Naive thymus-derived CD4-positive, alpha-beta T cell (primary cell): ENCODE measurements at regions of chr20 and their contacts with region 1.

Region 1: DNA sequence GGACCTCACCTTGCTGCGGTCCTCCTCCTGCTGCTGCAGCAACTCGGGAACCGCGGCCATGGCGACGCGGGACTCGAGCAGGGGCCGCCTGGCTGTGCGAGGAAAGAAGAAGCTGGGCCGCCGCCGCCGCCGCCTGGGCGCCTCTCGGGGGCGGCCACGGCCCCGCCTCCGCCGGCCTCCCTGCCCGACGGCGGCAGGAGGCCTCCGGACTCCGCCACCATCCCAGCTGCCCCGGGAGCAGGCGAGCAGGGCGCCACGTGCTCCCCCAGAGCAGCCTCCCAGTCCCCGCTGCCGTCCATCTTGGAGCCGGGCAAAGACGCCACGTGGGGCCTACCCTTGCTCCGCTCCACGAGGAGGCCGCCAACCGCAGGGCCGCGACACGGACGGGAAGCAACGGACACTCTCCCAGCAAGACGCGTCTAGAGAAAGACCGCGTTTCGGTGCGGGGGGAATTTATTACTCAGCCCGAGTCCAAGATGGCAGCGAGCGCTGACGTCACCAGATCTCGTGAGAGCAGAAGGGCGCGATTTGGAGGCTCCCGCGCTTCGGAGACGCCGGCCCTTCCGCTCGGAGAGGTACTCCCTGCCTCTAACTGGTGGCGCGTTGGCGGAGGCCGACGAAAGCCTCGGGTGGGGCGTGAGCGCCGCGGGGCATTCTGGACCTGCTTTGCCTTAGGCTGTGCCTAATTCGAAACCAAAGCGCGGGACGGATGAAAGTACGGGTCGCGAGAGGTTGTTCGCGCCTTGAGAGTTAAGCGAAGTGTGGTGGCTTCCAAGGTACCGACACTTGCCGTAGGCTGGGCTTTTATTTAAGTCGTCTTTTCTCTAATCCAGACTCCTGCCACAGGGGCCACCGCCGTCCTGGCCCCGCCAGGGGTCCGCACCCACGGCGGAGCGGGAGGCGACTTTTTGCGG is at the starts of genes MGME1 and SNX5:
- DNase-seq: peak; percentile 98 to 99 (median 99)
- ATAC-seq: peak; percentile 95
- H3K4me3 ChIP-seq: peak within 1 kb of the TSS; percentile 91
- H3K4me3 Mint-ChIP-seq: peak within 1 kb of the TSS; percentile 89 to 97 (median 94)
- H3K27ac ChIP-seq: peak within 1 kb of the TSS; percentile 96
- H3K27ac Mint-ChIP-seq: peak within 1 kb of the TSS; percentile 93 to 98 (median 97)
- H3K4me1 ChIP-seq: peaks cover 53 to 59% of the 10 kb centered on the region in 2 donors
- H3K4me1 Mint-ChIP-seq: peaks cover 54 to 76% (median 71%) of the 10 kb centered on the region in 7 donors
- H3K27me3 ChIP-seq: no peaks in the 10 kb centered on the region
- H3K27me3 Mint-ChIP-seq: no peaks in the 10 kb centered on the region
- total RNA-seq, gene MGME1: 4.9 to 41.0 (median 13.1) TPM
- total RNA-seq, gene SNX5: 41.4 to 148 (median 61.9) TPM

Region 2: DNA sequence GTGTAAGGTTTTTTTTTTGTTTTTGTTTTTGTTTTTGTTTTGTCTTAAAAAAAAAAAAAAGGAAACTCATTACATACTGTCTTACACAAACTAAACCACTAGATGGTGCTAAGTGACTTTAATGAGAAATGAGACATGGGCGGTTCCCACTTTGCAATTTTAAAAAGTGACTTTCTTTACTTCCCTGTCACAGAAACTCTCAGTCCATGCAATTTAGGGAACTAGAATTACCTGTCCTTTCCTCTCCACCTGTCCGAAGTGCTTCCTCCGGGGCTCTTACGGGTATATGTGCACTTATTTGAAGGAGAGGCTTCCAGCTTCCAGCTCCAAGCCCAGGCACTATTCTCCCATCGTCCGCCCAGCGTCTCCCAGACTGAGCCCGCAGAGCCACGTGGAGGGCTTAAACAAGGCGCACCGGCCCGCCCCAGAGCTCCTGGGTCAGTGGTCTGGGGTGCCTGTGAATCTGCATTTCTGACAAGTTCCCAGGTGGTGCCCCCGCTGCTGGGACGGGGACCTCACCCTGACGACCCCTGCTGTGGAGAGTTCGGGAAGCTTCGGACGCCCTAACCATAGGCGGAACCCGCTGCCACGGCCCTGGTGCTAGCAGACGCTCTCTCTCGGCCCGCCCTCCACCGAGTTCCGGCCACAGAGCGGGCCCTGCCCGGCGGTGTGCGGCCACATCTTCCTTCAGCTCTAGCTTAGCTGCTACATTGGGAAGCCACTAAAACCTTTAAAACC is 463.6 kb before region 1 on chr20:
- CTCF ChIA-PET with region 1: no interaction called
- POLR2A ChIA-PET with region 1: no interaction called
- intact Hi-C with region 1: loop called in 1 of 2 experiments (anchors 1 kb)
- DNase-seq: peak; percentile 13 to 70 (median 62)
- ATAC-seq: peak; percentile 85
- H3K4me3 ChIP-seq: peak overlapping the region; percentile 65
- H3K4me3 Mint-ChIP-seq: peak overlapping the region; percentile 82 to 95 (median 91)
- H3K27ac ChIP-seq: no peak overlapping the region
- H3K27ac Mint-ChIP-seq: peak overlapping the region in 8 of 9 donors; percentile 15 to 92 (median 82)
- H3K4me1 ChIP-seq: peaks cover 6 to 27% of the 10 kb centered on the region in 2 donors
- H3K4me1 Mint-ChIP-seq: peaks cover 10 to 57% (median 36%) of the 10 kb centered on the region in 7 donors
- H3K27me3 ChIP-seq: no peaks in the 10 kb centered on the region
- H3K27me3 Mint-ChIP-seq: peaks cover 0 to 19% (median 0%) of the 10 kb centered on the region in 5 donors

Region 3: DNA sequence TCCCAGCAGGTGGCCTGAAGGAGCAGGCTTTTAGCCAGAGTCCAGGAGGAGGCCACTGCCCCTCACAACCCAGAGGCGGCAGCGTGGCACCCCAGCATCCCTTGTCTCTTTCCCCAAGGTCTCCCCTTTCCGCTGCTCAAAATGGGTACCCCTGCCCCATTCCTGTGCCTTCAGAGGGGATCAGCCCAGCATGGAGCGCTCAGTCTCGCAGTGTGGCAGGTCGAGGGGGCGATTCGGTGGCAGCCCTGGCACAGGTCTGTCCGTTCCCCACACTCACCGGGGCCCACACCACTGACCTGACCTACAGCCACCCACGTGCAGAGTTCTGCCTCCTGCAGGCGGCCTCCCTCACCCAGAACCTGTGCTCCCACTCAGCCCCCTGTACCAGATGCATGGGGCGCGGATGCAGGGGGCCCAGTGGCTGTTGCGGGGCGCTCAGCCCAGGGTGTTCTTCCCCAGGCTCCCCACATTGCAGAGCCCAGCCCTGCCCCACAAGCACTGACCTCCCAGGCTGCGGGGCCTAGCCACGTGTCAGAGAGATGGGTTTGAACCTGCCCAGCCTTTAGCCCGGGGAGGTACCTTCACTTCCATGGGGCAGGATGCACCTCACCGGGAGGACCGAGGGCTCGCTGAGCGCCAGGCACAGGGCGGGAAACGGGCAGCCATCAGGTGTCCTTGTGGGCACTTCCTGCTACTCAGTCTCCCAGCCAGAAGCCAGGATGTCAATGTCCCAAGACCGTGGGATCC is 356.9 kb before region 1 on chr20:
- CTCF ChIA-PET with region 1: no interaction called
- POLR2A ChIA-PET with region 1: interaction called, 6 read pairs
- intact Hi-C with region 1: loop called in 1 of 2 experiments (anchors 2 kb)
- DNase-seq: peak in 4 of 9 donors; percentile 7 to 30 (median 20)
- ATAC-seq: no peak
- H3K4me3 ChIP-seq: peak overlapping the region; percentile 36
- H3K4me3 Mint-ChIP-seq: peak overlapping the region in 8 of 10 donors; percentile 23 to 85 (median 68)
- H3K27ac ChIP-seq: peak overlapping the region; percentile 60
- H3K27ac Mint-ChIP-seq: peak overlapping the region; percentile 85 to 98 (median 95)
- H3K4me1 ChIP-seq: peaks cover 39 to 40% of the 10 kb centered on the region in 2 donors
- H3K4me1 Mint-ChIP-seq: peaks cover 20 to 53% (median 40%) of the 10 kb centered on the region in 7 donors
- H3K27me3 ChIP-seq: no peaks in the 10 kb centered on the region
- H3K27me3 Mint-ChIP-seq: no peaks in the 10 kb centered on the region

Region 4: DNA sequence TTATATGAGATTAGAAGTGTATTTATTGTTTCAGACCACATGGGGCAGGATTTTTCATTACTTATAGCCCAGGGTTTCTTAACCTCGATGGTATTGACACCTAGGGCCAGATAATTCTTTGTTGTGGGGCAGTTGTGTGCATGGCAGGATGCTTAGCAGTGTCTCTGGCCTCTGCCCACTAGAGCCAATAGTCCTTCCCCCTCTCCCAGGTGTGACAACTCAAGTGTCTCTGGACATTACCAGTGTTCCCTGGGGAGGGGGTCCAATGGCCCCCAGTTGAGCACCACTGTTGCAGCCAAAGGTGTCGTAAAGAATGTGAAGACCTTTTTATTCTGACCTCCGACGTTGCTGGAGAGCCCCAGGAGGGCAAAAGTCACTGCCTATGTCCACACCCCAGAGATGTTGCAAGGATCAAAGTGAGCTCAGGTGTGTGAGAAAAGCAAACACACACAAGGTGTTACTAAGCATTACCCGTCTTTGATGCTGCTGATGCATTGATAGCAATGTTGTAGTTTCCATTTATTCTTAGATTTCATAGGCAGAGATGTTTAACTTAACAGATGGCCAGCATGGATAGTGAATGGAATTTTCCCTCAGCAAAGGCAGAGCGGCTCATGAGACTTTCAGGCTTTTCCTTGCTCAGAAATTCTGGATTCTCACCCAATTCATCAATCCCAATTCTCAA is 246.7 kb before region 1 on chr20:
- CTCF ChIA-PET with region 1: no interaction called
- POLR2A ChIA-PET with region 1: no interaction called
- intact Hi-C with region 1: no loop called
- DNase-seq: no peak
- ATAC-seq: no peak
- H3K4me3 ChIP-seq: no peak overlapping the region
- H3K4me3 Mint-ChIP-seq: no peak overlapping the region
- H3K27ac ChIP-seq: no peak overlapping the region
- H3K27ac Mint-ChIP-seq: no peak overlapping the region
- H3K4me1 ChIP-seq: no peaks in the 10 kb centered on the region
- H3K4me1 Mint-ChIP-seq: no peaks in the 10 kb centered on the region
- H3K27me3 ChIP-seq: no peaks in the 10 kb centered on the region
- H3K27me3 Mint-ChIP-seq: peaks cover 3 to 24% (median 5%) of the 10 kb centered on the region in 5 donors

Region 5: GRCh38 chr20:17987988-17988387 is 19.4 kb after region 1 on chr20:
- CTCF ChIA-PET with region 1: no interaction called
- POLR2A ChIA-PET with region 1: interaction called, 5 read pairs
- intact Hi-C with region 1: loop called in 1 of 2 experiments (anchors 2 kb)
- DNase-seq: peak in 6 of 9 donors; percentile 49 to 73 (median 64)
- ATAC-seq: peak; percentile 81
- H3K4me3 ChIP-seq: no peak overlapping the region
- H3K4me3 Mint-ChIP-seq: peak overlapping the region in 9 of 10 donors; percentile 4 to 62 (median 30)
- H3K27ac ChIP-seq: no peak overlapping the region
- H3K27ac Mint-ChIP-seq: peak overlapping the region in 6 of 9 donors; percentile 0 to 68 (median 36)
- H3K4me1 ChIP-seq: peaks cover 0 to 5% of the 10 kb centered on the region in 2 donors
- H3K4me1 Mint-ChIP-seq: peaks cover 2 to 42% (median 18%) of the 10 kb centered on the region in 7 donors
- H3K27me3 ChIP-seq: no peaks in the 10 kb centered on the region
- H3K27me3 Mint-ChIP-seq: no peaks in the 10 kb centered on the region

Region 6: DNA sequence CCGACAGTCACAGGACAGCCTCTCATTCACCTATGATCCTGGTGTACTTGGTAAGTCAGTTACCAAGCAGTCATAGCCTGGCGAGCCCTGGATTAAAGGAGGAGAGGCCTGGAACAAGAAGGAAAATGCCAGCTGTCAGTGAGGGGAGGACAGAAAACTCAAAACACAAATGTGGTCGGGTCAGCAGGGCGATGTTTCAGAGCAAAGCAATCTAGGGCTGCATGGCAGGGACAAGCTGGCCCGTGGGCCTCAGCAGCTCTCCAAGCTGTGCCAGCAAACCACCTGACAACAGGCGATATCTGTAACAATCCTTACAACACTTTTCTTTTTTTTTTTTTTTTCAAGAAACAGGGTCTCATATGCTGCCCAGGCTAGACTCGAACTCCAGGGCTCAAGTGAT is 40.5 kb after region 1 on chr20:
- CTCF ChIA-PET with region 1: no interaction called
- POLR2A ChIA-PET with region 1: no interaction called
- intact Hi-C with region 1: no loop called
- DNase-seq: no peak
- ATAC-seq: no peak
- H3K4me3 ChIP-seq: no peak overlapping the region
- H3K4me3 Mint-ChIP-seq: no peak overlapping the region
- H3K27ac ChIP-seq: no peak overlapping the region
- H3K27ac Mint-ChIP-seq: no peak overlapping the region
- H3K4me1 ChIP-seq: no peaks in the 10 kb centered on the region
- H3K4me1 Mint-ChIP-seq: no peaks in the 10 kb centered on the region
- H3K27me3 ChIP-seq: no peaks in the 10 kb centered on the region
- H3K27me3 Mint-ChIP-seq: no peaks in the 10 kb centered on the region

Region 7: DNA sequence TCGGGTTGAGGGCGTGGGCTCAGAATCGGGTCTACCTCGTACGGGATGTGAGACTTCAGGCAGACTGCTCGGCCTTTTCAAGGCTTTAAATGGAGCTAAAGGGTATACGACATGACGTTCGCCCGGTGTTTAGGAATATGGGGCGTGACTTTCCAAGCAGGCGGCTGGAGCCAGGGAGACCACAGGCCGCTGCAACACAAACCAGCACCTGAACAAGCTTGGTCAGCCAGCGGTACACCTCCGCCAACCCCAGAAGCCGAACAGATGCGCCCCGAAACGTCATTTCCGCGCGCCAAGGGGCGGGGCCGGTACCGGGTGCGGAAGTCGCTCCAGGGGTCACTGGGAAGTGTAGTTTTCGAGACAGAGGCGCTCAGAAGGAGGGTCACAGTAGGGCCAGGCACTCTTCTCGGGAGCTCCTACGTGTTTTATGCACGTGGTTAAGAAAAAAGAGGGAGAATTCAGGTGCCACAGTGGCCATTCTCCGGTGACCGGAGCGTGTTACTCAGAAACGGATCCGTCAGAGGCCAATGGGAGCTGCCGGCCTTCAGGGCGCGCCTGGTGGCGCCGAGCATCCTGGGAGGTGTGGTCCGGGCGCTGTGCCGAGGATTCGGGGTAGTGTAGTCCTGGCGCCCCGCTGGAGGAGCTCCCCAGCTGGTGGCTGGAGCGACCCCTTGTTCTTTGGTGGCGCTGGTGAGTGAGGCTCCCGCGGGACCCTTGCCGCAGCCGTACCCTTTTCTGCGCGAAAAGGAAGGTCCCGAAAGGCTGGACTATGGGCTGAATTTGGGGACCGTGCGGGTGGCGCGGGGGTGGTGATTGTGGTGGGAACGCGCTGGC is 319.5 kb after region 1 on chr20 and contains the start of gene ZNF133:
- CTCF ChIA-PET with region 1: no interaction called
- POLR2A ChIA-PET with region 1: interaction called, 7 read pairs
- intact Hi-C with region 1: loop called (anchors 1 kb)
- DNase-seq: peak; percentile 96 to 100 (median 98)
- ATAC-seq: peak; percentile 96
- H3K4me3 ChIP-seq: peak within 1 kb of the TSS; percentile 91
- H3K4me3 Mint-ChIP-seq: peak within 1 kb of the TSS; percentile 93 to 99 (median 98)
- H3K27ac ChIP-seq: peak within 1 kb of the TSS; percentile 96
- H3K27ac Mint-ChIP-seq: peak within 1 kb of the TSS; percentile 98 to 100 (median 99)
- H3K4me1 ChIP-seq: peaks cover 4 to 10% of the 10 kb centered on the region in 2 donors
- H3K4me1 Mint-ChIP-seq: peaks cover 16 to 51% (median 35%) of the 10 kb centered on the region in 7 donors
- H3K27me3 ChIP-seq: peaks cover 0 to 7% of the 10 kb centered on the region in 2 donors
- H3K27me3 Mint-ChIP-seq: peaks cover 14 to 30% (median 20%) of the 10 kb centered on the region in 5 donors
- total RNA-seq, gene ZNF133: 6.5 to 11.5 (median 9.4) TPM

Region 8: GRCh38 chr20:18566892-18567742 is 598.5 kb after region 1 on chr20 and contains the start of gene SMIM26:
- CTCF ChIA-PET with region 1: interaction called, 4 read pairs
- POLR2A ChIA-PET with region 1: no interaction called
- intact Hi-C with region 1: loop called (anchors 1 to 5 kb)
- DNase-seq: peak; percentile 85 to 94 (median 92)
- ATAC-seq: peak; percentile 99
- H3K4me3 ChIP-seq: peak within 1 kb of the TSS; percentile 76
- H3K4me3 Mint-ChIP-seq: peak within 1 kb of the TSS; percentile 93 to 99 (median 96)
- H3K27ac ChIP-seq: peak within 1 kb of the TSS; percentile 95
- H3K27ac Mint-ChIP-seq: peak within 1 kb of the TSS; percentile 92 to 100 (median 99)
- H3K4me1 ChIP-seq: peaks cover 4 to 15% of the 10 kb centered on the region in 2 donors
- H3K4me1 Mint-ChIP-seq: peaks cover 14 to 25% (median 22%) of the 10 kb centered on the region in 7 donors
- H3K27me3 ChIP-seq: no peaks in the 10 kb centered on the region
- H3K27me3 Mint-ChIP-seq: no peaks in the 10 kb centered on the region
- total RNA-seq, gene SMIM26: 51.2 to 78.4 (median 69.5) TPM

Region 9: DNA sequence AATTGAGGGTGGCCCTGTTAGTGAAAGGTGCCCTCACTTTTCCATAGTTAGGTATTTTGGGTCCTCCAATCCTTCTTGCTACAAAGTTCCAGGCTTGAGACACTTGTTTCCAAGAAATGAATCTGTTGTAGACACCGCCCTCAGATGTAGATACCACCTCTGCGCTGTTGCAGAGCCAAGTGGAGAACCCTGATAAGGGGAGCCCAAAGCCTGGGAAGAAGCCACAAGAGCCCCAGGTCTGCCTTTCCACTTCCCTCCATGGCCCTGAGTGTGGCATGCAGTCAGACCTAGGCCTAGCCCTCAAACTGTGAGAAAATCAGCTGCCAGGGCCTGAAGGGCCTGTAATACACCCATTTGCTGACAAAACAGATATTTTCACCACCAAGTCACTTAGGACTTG is 656.3 kb after region 1 on chr20:
- CTCF ChIA-PET with region 1: no interaction called
- POLR2A ChIA-PET with region 1: no interaction called
- intact Hi-C with region 1: no loop called
- DNase-seq: no peak
- ATAC-seq: no peak
- H3K4me3 ChIP-seq: no peak overlapping the region
- H3K4me3 Mint-ChIP-seq: no peak overlapping the region
- H3K27ac ChIP-seq: no peak overlapping the region
- H3K27ac Mint-ChIP-seq: no peak overlapping the region
- H3K4me1 ChIP-seq: no peaks in the 10 kb centered on the region
- H3K4me1 Mint-ChIP-seq: peaks cover 0 to 5% (median 0%) of the 10 kb centered on the region in 7 donors
- H3K27me3 ChIP-seq: no peaks in the 10 kb centered on the region
- H3K27me3 Mint-ChIP-seq: no peaks in the 10 kb centered on the region